AG04449 (cell line): ENCODE measurements at regions of chr22 and their contacts with region 1.

Region 1: GRCh38 chr22:32489377-32489776 is 14.8 kb downstream of the FBXO7 start:
- DNase-seq: no peak
- H3K4me3 ChIP-seq: no peak overlapping the region
- CTCF ChIP-seq: no peak

Region 2: DNA sequence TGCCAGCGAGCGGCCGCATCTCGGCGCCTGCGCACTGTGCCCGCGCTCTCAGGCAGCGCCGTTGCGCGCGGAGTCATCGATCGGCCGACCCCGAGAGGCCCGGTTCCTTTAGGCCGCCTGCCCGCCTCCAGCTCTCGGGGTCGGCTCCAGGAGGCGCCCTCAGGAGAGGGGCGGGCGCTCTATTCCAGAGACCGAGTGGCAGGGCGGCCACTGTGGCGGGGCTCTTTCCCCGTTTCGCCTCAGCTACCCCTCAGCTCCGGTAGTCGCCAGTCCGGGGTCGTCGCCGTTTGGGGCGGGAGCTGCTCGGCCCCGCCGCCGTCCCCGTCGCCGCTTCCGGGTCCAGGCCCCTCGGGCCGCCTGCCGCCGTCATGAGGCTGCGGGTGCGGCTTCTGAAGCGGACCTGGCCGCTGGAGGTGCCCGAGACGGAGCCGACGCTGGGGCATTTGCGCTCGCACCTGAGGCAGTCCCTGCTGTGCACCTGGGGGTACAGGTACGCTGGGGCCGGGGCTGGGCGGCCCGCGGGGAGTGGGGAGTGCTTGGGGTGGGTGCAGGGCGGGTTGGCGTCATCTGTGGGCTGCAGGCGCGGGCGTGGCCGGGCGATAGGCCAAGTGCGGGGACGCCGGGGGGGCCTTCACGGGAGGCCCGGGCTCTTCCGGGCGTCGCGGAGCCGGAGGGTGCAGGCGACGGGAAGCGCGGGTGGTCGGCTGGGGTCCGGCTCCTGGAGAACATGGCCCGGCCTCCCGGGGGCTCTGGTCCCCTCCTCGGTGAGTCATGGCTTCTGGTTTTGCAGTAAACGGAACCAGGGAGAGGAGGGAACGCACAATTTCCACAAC is 14.5 kb before region 1 on chr22 and contains the start of gene FBXO7:
- CTCF ChIA-PET with region 1: interaction called, 12 read pairs
- POLR2A ChIA-PET with region 1: no interaction called
- DNase-seq: peak; percentile 36
- H3K4me3 ChIP-seq: peak within 1 kb of the TSS; percentile 89
- CTCF ChIP-seq: peak; percentile 75